SK-N-SH (cell line): ENCODE measurements at regions of chr1 and their contacts with region 1.

Region 1: DNA sequence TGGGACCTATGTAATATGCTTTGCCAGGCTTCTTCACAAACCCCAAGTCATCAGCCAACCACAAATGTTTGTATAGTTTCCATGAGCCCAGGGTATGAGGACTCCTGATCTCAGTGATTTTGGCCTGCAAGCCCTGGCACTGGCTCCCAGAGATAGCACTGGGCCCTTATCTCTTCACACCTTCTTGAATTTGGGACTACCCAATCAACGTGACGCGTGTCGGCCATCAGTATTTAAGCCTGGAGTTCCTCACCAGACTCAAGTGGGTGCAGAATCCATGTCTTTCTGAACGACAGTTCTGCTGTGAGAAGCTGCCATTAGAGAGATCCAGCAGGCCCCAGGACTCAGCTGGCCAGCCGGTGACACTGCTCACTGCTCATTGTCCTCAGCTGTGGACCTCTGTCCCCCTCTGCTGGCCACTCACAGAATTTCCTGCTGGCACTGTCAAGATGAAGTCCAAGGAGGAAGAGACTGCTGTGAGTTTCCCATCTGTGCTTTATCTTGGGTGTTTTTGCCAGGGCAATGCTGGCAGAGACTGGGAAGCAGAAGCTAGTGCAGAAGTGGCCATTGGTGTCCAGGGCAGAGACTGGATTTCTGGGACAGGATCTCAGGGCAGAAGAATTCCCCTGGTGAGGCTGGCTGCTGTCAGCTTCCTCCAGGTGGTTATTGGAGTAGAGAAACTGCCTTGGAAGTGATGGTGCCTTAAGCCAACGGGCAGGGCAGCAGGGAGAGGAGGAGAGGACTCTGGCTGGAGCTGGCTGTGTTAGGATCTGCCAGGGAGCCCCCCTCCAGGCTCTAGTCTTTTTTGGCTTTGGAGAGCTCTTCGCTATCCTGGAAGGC is 28.4 kb downstream of the TMCC2 start:
- DNase-seq: peak; percentile 90
- H3K4me3 ChIP-seq: no peak overlapping the region; a peak in 1 of 4 replicates
- H3K27ac ChIP-seq: no peak overlapping the region
- H3K4me1 ChIP-seq: peaks cover 14 to 19% of the 10 kb centered on the region in 2 experiments; a peak in 3 of 4 replicates
- H3K27me3 ChIP-seq: no peaks in the 10 kb centered on the region
- CTCF ChIP-seq: peak; percentile 94
- EP300 ChIP-seq: no peak
- RAD21 ChIP-seq: peak; percentile 100

Region 2: GRCh38 chr1:204928671-204929486 is 327.3 kb before region 1 on chr1:
- CTCF ChIA-PET with region 1: no interaction called
- POLR2A ChIA-PET with region 1: no interaction called
- DNase-seq: no peak
- H3K4me3 ChIP-seq: no peak overlapping the region
- H3K27ac ChIP-seq: no peak overlapping the region
- H3K4me1 ChIP-seq: no peaks in the 10 kb centered on the region
- H3K27me3 ChIP-seq: no peaks in the 10 kb centered on the region; the same call in 1 of the 2 replicates
- CTCF ChIP-seq: no peak
- EP300 ChIP-seq: no peak
- RAD21 ChIP-seq: no peak

Region 3: DNA sequence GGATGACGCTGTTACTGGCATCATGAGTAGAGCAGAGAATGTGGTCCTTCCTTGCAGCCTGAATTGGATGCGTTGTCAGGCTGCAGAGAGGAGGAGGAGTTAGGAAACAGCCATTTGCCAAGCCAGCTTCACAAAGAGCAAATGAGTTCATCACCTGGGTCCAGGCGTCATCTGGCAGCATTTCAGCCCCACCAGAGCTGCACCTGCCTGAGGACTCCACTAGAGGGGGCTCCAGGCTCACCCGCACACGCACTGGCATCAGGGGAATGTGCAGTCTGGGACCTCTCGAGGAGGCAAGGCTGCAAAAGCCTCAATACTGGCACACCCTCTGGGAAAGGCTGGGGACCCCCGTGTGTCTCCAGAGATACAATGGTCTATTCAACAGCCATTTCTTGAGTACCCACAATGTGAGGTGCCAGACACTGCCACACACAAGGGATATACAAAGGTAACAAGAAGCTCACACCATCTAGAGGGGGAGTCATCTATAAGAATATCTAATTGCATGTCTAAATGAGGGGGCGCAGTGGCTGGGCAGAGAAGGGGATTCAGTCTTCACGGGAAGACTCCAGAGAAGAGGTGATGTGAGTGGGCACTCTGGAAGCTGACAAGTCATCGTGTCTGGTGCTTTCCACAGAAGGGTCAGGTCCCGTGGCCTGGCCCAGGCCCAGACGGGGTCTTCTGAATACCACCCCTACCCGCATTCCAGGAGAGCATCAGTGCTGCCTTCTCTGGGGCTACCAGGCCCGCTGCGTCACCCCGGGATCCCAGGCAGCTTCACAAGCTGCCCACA is 266.7 kb before region 1 on chr1:
- CTCF ChIA-PET with region 1: interaction called, 113 read pairs
- POLR2A ChIA-PET with region 1: no interaction called
- DNase-seq: peak; percentile 95
- H3K4me3 ChIP-seq: no peak overlapping the region; a peak in 1 of 4 replicates
- H3K27ac ChIP-seq: no peak overlapping the region
- H3K4me1 ChIP-seq: peaks cover 0 to 2% of the 10 kb centered on the region in 2 experiments; a peak in 2 of 4 replicates
- H3K27me3 ChIP-seq: no peaks in the 10 kb centered on the region
- CTCF ChIP-seq: peak; percentile 98
- EP300 ChIP-seq: no peak
- RAD21 ChIP-seq: peak; percentile 99

Region 4: GRCh38 chr1:205121660-205122488 is 134.3 kb before region 1 on chr1 and contains the start of gene RBBP5:
- CTCF ChIA-PET with region 1: interaction called, 19 read pairs
- POLR2A ChIA-PET with region 1: no interaction called
- DNase-seq: peak; percentile 84
- H3K4me3 ChIP-seq: peak within 1 kb of the TSS; percentile 80 to 92
- H3K27ac ChIP-seq: peak within 1 kb of the TSS; percentile 87 to 96
- H3K4me1 ChIP-seq: peaks cover 11 to 17% of the 10 kb centered on the region in 2 experiments; a peak in 3 of 4 replicates
- H3K27me3 ChIP-seq: no peaks in the 10 kb centered on the region
- CTCF ChIP-seq: peak; percentile 84
- EP300 ChIP-seq: peak in 1 of 2 experiments; percentile 36; a peak in 1 of 4 replicates
- RAD21 ChIP-seq: peak; percentile 55
- polyA plus RNA-seq, gene RBBP5: 5.7 and 7.7 TPM in 2 replicates

Region 5: GRCh38 chr1:205190845-205191577 is 65.2 kb before region 1 on chr1:
- CTCF ChIA-PET with region 1: interaction called, 15 read pairs
- POLR2A ChIA-PET with region 1: no interaction called
- DNase-seq: no peak
- H3K4me3 ChIP-seq: no peak overlapping the region
- H3K27ac ChIP-seq: no peak overlapping the region
- H3K4me1 ChIP-seq: peaks cover 7 to 13% of the 10 kb centered on the region in 2 experiments; a peak in 2 of 4 replicates
- H3K27me3 ChIP-seq: no peaks in the 10 kb centered on the region
- CTCF ChIP-seq: no peak
- EP300 ChIP-seq: no peak
- RAD21 ChIP-seq: no peak

Region 6: GRCh38 chr1:205237526-205238484 is 18.4 kb before region 1 on chr1:
- CTCF ChIA-PET with region 1: interaction called, 75 read pairs
- POLR2A ChIA-PET with region 1: no interaction called
- DNase-seq: no peak
- H3K4me3 ChIP-seq: no peak overlapping the region
- H3K27ac ChIP-seq: no peak overlapping the region
- H3K4me1 ChIP-seq: peaks cover 0 to 2% of the 10 kb centered on the region in 2 experiments; a peak in 1 of 4 replicates
- H3K27me3 ChIP-seq: no peaks in the 10 kb centered on the region
- CTCF ChIP-seq: no peak
- EP300 ChIP-seq: no peak
- RAD21 ChIP-seq: no peak

Region 7: DNA sequence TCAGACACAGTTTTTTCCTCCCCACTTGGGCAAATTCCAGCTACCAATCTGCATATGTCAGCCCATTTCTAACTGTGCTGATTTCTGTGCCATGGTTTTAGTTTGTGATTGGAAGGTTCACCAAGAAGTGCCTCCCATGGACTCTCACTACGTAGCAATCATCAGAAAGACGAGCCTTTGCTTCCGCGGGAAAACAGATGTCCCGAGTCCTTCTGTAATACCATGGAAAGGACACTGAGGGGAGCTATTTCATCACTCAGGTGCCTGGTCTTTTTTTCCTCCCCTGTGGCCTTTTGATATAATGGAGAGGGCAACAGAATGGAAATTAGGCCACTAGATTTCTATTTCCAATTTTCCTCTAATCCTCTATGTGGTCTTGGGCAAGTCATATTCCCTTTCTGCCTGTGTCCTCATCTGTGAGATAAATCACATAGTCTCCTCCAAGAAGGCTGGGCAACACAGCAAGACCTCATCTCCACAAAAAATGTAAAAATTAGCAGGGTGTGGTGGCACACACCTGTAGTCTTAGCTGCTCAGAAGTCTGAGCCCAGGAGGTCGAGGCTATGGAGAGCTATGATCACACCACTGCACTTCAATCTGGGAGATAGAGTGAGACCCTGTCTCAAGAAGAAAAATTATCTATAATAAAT is 140.9 kb after region 1 on chr1:
- CTCF ChIA-PET with region 1: no interaction called
- POLR2A ChIA-PET with region 1: no interaction called
- DNase-seq: peak; percentile 75
- H3K4me3 ChIP-seq: peak overlapping the region in 1 of 2 experiments; percentile 38; a peak in 1 of 4 replicates
- H3K27ac ChIP-seq: no peak overlapping the region
- H3K4me1 ChIP-seq: no peaks in the 10 kb centered on the region
- H3K27me3 ChIP-seq: no peaks in the 10 kb centered on the region; the same call in 1 of the 2 replicates
- CTCF ChIP-seq: peak; percentile 65
- EP300 ChIP-seq: no peak
- RAD21 ChIP-seq: peak; percentile 94

Region 8: DNA sequence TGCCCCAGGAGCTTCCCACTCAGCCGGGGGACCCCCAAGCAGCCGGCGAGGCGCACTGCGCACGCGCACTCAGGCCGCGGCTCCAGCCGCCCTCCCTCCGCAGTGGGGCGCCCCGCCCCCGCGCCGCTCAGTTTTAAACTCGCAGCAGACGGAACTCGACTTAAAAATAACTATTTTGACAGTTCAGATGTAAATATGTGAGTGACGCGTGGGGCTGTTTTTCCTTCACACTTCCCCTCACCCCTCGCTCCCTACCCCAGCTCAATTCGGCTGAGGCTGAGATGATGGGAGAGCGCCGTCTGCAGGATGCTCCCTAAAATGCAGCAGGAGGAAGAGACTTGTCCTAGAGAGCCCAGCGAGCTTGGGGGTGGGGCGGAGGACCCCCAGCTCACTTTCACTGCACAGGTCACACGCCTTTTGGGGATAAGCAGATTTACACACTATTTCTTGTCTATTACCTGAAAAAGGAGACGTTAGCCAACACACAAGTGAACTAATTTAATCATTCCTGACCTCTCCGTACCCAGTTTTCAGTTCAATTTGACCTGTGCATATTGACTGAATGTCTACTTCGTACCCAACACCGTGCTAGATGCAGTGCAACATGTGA is 174.6 kb after region 1 on chr1:
- CTCF ChIA-PET with region 1: no interaction called
- POLR2A ChIA-PET with region 1: no interaction called
- DNase-seq: no peak
- H3K4me3 ChIP-seq: peak overlapping the region in 1 of 2 experiments; percentile 35; a peak in 1 of 4 replicates
- H3K27ac ChIP-seq: no peak overlapping the region
- H3K4me1 ChIP-seq: no peaks in the 10 kb centered on the region; a peak in 1 of 4 replicates
- H3K27me3 ChIP-seq: peaks cover 52% of the 10 kb centered on the region
- CTCF ChIP-seq: peak; percentile 22; the same call in 1 of the 2 replicates
- EP300 ChIP-seq: no peak
- RAD21 ChIP-seq: no peak